HEK293 (cell line): ENCODE measurements at regions of chr6 and their contacts with region 1.

Region 1: DNA sequence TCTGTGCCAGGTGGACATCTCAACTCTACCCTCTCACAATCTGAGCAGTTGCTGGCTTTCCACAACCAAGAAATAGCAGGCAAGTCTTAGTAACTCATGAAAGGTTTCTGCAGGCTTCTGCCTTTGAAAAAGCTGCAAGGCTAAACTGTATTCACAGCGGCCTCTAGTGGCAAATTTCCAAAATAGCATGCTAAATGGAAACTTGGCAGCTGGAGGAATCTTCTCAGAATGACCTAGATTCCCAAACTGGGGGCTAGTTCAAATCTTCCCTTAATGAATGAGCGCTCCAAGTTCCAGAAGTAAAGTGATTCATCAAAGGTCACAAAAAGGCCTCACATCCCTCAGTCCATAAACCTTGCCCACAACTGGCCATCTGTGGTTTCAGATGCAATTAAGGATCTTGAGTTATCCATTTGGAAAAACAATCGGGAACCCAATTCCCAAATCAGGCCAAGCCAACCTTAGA is 11.9 kb upstream of the CPNE5 start:
- H3K4me3 ChIP-seq: no peak overlapping the region
- H3K27ac ChIP-seq: no peak overlapping the region
- H3K4me1 ChIP-seq: no peaks in the 10 kb centered on the region; the same call in 1 of the 2 replicates
- CTCF ChIP-seq: peak; percentile 40; the same call in 1 of the 2 replicates

Region 2: DNA sequence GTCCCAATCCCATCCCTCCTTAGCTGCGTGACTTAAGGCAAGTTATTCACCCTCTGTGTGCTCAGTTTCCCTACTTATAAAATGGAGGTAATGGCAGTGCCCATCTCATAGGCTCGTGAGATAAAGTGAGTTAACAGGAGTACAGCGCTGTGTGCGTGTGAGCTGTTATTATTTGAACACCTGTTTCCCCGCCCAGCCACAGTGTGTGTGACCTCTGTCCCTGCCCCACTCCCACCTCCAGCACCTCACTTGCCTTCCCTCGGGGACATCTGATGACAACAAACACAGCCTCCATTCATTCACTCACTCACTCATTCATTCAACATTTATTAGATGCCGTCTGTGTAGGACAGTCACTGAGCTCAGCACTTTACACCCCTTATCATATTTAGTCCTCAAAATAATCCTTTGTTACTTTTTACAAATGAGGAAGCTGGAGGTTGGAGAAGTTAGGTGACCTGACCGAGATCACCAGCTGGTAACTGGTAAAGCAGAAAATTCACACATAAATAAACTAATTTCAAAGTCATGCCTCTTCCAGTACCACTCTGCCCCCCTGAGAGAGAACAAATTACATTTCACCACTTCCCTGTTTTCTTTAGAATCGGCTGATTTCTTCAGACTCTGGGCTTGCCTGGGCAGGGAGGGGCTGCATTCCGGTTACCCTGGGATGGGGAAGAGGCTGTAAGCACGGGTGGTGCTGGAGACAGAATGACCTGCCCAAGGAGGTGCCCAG is 70.6 kb before region 1 on chr6:
- CTCF ChIA-PET with region 1: interaction called, 298 read pairs
- POLR2A ChIA-PET with region 1: no interaction called
- H3K4me3 ChIP-seq: no peak overlapping the region
- H3K27ac ChIP-seq: no peak overlapping the region
- H3K4me1 ChIP-seq: no peaks in the 10 kb centered on the region
- CTCF ChIP-seq: no peak

Region 3: GRCh38 chr6:36793913-36794712 is 57.1 kb before region 1 on chr6:
- CTCF ChIA-PET with region 1: interaction called, 11 read pairs
- POLR2A ChIA-PET with region 1: no interaction called
- H3K4me3 ChIP-seq: no peak overlapping the region
- H3K27ac ChIP-seq: no peak overlapping the region
- H3K4me1 ChIP-seq: no peaks in the 10 kb centered on the region
- CTCF ChIP-seq: no peak

Region 4: GRCh38 chr6:36809941-36810803 is 41.0 kb before region 1 on chr6:
- CTCF ChIA-PET with region 1: interaction called, 49 read pairs
- POLR2A ChIA-PET with region 1: no interaction called
- H3K4me3 ChIP-seq: no peak overlapping the region
- H3K27ac ChIP-seq: no peak overlapping the region
- H3K4me1 ChIP-seq: no peaks in the 10 kb centered on the region
- CTCF ChIP-seq: peak; percentile 21; the same call in 1 of the 2 replicates

Region 5: GRCh38 chr6:36827261-36828079 is 23.7 kb before region 1 on chr6:
- CTCF ChIA-PET with region 1: interaction called, 11 read pairs
- POLR2A ChIA-PET with region 1: no interaction called
- H3K4me3 ChIP-seq: no peak overlapping the region
- H3K27ac ChIP-seq: no peak overlapping the region
- H3K4me1 ChIP-seq: 0 out of 2 replicates have a peak, but pooled peaks cover 3% of the 10 kb centered on the region
- CTCF ChIP-seq: no peak

Region 6: GRCh38 chr6:36839749-36840431 is 11.3 kb before region 1 on chr6:
- CTCF ChIA-PET with region 1: interaction called, 23 read pairs
- POLR2A ChIA-PET with region 1: interaction called, 6 read pairs
- H3K4me3 ChIP-seq: peak overlapping the region; percentile 46
- H3K27ac ChIP-seq: no peak overlapping the region
- H3K4me1 ChIP-seq: no peaks in the 10 kb centered on the region
- CTCF ChIP-seq: no peak; the same call in 1 of the 2 replicates

Region 7: DNA sequence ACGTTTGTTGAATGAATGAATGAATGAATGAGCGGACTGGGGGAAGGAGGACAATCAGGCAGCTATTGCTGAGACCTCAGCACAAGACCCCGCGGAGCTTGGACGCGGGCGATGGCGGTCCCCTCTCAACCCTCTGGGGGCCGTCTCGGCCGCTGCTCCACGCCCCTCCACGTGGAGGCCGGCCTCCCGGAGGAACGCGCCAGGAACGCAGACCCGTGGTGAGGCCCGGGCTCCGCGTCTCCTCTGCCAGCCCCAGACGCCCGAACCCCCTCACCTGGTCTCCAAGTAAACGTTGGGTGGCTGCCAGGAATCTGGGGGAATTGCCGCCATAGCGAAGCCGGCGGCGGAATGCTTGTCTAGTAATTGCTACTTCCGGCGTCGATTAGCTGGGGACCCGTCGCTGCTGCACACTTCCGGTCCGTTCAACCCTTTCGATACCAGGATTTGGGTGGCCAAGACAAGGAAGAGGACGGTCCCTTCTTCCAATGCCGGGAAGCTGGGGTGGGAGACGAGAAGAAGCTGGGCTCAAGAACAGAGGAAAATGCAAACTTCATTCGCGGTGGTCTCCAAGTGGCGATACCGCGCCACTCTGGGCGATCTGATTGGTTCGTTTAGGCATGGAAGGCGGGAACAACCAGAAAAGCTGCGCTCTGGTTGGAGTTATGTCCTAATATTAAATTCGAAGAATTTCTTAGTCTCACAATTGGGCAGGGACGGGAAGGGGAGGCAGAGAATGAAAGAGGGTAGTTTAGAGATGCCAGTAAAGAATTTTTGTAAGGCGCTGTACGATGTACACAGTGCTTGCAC is 23.5 kb after region 1 on chr6 and contains the start of gene PPIL1:
- CTCF ChIA-PET with region 1: interaction called, 77 read pairs
- POLR2A ChIA-PET with region 1: interaction called, 14 read pairs
- H3K4me3 ChIP-seq: peak within 1 kb of the TSS; percentile 86
- H3K27ac ChIP-seq: peak within 1 kb of the TSS; percentile 99
- H3K4me1 ChIP-seq: no peaks in the 10 kb centered on the region
- CTCF ChIP-seq: peak; percentile 74

Region 8: DNA sequence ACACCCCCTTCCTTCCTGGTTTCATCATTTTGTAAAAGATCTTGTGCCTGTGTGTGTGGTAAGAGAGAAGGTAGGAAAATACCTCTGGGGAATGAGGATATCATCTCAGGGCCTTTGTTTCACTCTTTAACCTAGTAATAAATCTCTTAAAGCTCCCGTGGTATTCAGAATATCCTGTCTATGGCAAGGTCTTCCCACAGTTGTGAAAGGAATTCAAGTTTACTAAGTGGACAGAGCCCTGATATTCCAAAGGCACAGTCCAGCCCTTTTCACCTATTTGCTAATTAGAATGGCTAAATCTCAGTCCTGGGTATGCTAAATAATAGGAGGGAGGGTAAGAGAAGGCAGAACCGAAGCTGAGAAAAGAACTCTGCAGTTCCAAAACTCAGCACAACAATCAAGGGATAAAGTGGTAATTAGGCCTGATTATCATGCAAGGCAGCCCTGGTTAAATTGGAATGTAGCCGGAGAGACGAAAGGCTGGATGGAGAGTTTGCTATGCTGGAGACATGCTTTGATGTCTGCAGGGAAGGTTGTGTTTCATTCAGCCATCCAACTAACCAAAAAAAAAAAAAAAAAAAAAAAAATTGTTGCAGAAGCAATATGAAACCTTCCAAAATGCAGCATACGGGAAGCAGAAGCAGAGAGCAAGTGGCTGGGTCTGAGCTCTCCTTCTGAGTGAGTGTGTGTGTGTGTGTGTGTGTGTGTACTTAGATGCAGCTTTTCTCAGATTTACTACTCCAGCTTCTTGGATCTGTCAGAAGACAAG is 290.3 kb after region 1 on chr6:
- CTCF ChIA-PET with region 1: no interaction called
- POLR2A ChIA-PET with region 1: no interaction called
- H3K4me3 ChIP-seq: no peak overlapping the region
- H3K27ac ChIP-seq: no peak overlapping the region
- H3K4me1 ChIP-seq: peaks cover 23% of the 10 kb centered on the region
- CTCF ChIP-seq: no peak

Region 9: GRCh38 chr6:37239526-37239925 is 388.3 kb after region 1 on chr6:
- CTCF ChIA-PET with region 1: no interaction called
- POLR2A ChIA-PET with region 1: no interaction called
- H3K4me3 ChIP-seq: no peak overlapping the region
- H3K27ac ChIP-seq: no peak overlapping the region; the same call in 1 of the 2 replicates
- H3K4me1 ChIP-seq: peaks cover 5% of the 10 kb centered on the region
- CTCF ChIP-seq: no peak